KBM-7 (cell line): ENCODE measurements at regions of chr18 and their contacts with region 1.

Region 1: GRCh38 chr18:47772374-47773248 is 157.8 kb downstream of the SMAD2 start:
- DNase-seq: peak; percentile 76

Region 2: GRCh38 chr18:47381975-47382570 is 390.5 kb before region 1 on chr18:
- in situ Hi-C with region 1: no loop called
- DNase-seq: no peak

Region 3: DNA sequence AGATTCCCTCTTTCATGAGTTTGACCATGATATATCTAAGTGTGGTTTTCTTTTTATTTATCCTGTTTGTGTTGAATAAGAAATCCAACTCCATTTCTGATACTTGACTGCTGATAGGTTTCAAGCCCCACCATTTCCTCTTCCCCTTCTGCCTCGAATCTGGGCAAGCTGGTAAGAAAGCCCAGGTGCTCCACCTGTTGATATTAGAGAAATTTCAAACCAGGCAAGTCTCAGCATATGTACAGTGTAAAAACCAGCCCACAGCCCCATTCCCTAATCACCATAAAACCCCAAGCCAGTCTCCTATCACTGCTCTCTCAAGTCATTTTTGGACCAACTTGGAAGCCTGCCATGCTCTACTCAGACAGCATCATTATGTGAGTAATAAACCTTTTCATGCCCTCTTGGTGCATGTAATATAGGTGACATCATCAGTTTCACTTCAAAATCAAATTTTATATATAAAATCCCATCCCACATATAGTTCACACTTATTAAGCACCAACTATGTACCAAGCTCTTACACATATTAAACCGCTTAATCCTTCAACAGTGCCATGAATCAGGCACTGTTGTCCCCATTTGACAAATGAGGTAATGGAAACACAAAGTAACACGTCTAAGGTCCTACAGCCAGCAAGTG is 111.3 kb after region 1 on chr18:
- in situ Hi-C with region 1: loop called (anchors 25 kb)
- DNase-seq: no peak

Region 4: GRCh38 chr18:48017635-48018034 is 245.0 kb after region 1 on chr18:
- in situ Hi-C with region 1: loop called (anchors 10 kb)
- DNase-seq: no peak

Region 5: DNA sequence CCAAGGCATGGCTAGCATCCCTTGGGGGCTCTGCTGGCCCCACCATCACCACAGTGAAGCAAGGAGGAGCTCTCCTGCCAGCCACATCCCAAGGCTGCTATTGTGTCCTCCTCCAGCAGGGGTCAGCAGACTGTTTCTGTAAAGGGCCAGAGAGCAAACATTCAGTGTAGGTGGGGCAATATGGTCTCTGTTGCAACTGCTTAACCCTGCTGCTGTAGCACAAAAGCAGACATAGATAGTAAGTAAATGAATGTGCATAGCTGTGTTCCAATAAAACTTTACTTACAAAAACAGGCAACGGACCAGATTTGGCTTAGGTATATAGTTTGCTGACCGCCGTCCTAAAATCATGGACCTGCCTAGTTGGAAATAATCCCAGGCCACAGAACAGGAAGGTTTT is 672.9 kb after region 1 on chr18:
- in situ Hi-C with region 1: loop called (anchors 25 kb)
- DNase-seq: peak; percentile 83